ENCODE measurements at regions of chr21 and their contacts with region 1.

Region 1: DNA sequence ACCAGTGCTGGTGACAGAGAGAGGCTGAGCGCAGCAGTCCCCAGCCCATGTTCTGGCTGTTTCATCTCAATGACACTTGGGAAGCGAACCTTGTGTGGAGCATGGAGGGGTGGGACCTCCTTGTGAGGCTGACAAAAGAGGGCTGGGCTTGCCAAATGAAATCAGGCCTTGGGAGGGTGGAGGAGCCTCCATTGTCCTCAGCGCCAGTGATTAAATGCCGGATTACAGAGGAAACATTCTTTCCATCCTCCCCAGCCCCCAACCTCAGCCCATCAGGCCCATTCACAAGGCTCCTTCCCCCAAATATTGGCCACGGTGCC is 63.3 kb upstream of the PAXBP1 start:
- DNase-seq: no peak
- H3K4me3 ChIP-seq: no peak overlapping the region
- H3K4me3 Mint-ChIP-seq: no peak overlapping the region
- H3K27ac ChIP-seq: no peak overlapping the region
- H3K27ac Mint-ChIP-seq: no peak overlapping the region
- H3K4me1 ChIP-seq: no peaks in the 10 kb centered on the region
- H3K4me1 Mint-ChIP-seq: no peaks in the 10 kb centered on the region
- H3K27me3 ChIP-seq: no peaks in the 10 kb centered on the region
- H3K27me3 Mint-ChIP-seq: peaks cover 2 to 3% of the 10 kb centered on the region in 2 donors

Region 2: GRCh38 chr21:32916522-32917099 is 81.7 kb after region 1 on chr21:
- CTCF ChIA-PET with region 1: no interaction called
- POLR2A ChIA-PET with region 1: no interaction called
- intact Hi-C with region 1: loop called (anchors 10 kb)
- DNase-seq: no peak
- H3K4me3 ChIP-seq: no peak overlapping the region
- H3K4me3 Mint-ChIP-seq: no peak overlapping the region
- H3K27ac ChIP-seq: no peak overlapping the region
- H3K27ac Mint-ChIP-seq: peak overlapping the region in 2 of 7 donors; percentile 13 to 33
- H3K4me1 ChIP-seq: peaks cover 32% of the 10 kb centered on the region
- H3K4me1 Mint-ChIP-seq: peaks cover 23 to 46% (median 34%) of the 10 kb centered on the region in 4 donors
- H3K27me3 ChIP-seq: no peaks in the 10 kb centered on the region
- H3K27me3 Mint-ChIP-seq: no peaks in the 10 kb centered on the region

Region 3: GRCh38 chr21:33127154-33127893 is 292.4 kb after region 1 on chr21:
- CTCF ChIA-PET with region 1: interaction called, 27 read pairs
- POLR2A ChIA-PET with region 1: no interaction called
- intact Hi-C with region 1: loop called (anchors 1 kb)
- DNase-seq: peak; percentile 31 to 48 (median 41)
- H3K4me3 ChIP-seq: peak overlapping the region in 1 of 2 donors; percentile 20
- H3K4me3 Mint-ChIP-seq: peak overlapping the region in 7 of 8 donors; percentile 73 to 82 (median 75)
- H3K27ac ChIP-seq: no peak overlapping the region
- H3K27ac Mint-ChIP-seq: no peak overlapping the region
- H3K4me1 ChIP-seq: peaks cover 7% of the 10 kb centered on the region
- H3K4me1 Mint-ChIP-seq: peaks cover 4 to 7% (median 6%) of the 10 kb centered on the region in 4 donors
- H3K27me3 ChIP-seq: no peaks in the 10 kb centered on the region
- H3K27me3 Mint-ChIP-seq: peaks cover 12 to 25% of the 10 kb centered on the region in 2 donors

Region 4: GRCh38 chr21:33374450-33375096 is 539.7 kb after region 1 on chr21:
- CTCF ChIA-PET with region 1: interaction called, 3 read pairs
- POLR2A ChIA-PET with region 1: no interaction called
- intact Hi-C with region 1: loop called (anchors 10 kb)
- DNase-seq: peak in 4 of 5 donors; percentile 52 to 55 (median 54)
- H3K4me3 ChIP-seq: no peak overlapping the region
- H3K4me3 Mint-ChIP-seq: no peak overlapping the region
- H3K27ac ChIP-seq: no peak overlapping the region
- H3K27ac Mint-ChIP-seq: peak overlapping the region in 1 of 7 donors; percentile 51
- H3K4me1 ChIP-seq: peaks cover 13% of the 10 kb centered on the region
- H3K4me1 Mint-ChIP-seq: peaks cover 7 to 21% (median 10%) of the 10 kb centered on the region in 4 donors
- H3K27me3 ChIP-seq: no peaks in the 10 kb centered on the region
- H3K27me3 Mint-ChIP-seq: no peaks in the 10 kb centered on the region

Region 5: DNA sequence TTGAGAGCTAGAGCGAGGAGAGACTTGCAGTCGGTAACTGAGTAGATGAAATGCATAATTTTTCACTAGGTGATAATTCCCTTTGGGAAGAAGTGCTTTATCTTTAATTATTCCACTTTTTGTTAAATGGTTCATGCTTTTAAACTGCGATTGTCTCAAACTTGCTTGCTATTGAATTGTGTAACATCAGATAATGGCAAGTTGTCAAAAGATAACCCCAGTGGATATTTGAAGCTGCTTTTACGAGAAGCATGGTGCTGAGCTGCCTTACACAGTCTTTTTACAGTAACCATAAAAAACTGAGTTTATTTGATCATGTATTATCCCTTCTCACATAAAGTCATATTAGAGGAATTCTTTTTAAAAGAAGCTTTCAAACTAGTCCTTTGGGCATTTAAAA is 614.7 kb after region 1 on chr21:
- CTCF ChIA-PET with region 1: interaction called, 15 read pairs
- POLR2A ChIA-PET with region 1: interaction called, 3 read pairs
- intact Hi-C with region 1: loop called (anchors 5 kb)
- DNase-seq: no peak
- H3K4me3 ChIP-seq: no peak overlapping the region
- H3K4me3 Mint-ChIP-seq: no peak overlapping the region
- H3K27ac ChIP-seq: no peak overlapping the region
- H3K27ac Mint-ChIP-seq: no peak overlapping the region
- H3K4me1 ChIP-seq: no peaks in the 10 kb centered on the region
- H3K4me1 Mint-ChIP-seq: peaks cover 3 to 5% (median 4%) of the 10 kb centered on the region in 4 donors
- H3K27me3 ChIP-seq: no peaks in the 10 kb centered on the region
- H3K27me3 Mint-ChIP-seq: no peaks in the 10 kb centered on the region

Measured in CD4-positive, alpha-beta memory T cell (primary cell).